Activated CD4-positive, alpha-beta T cell treated with anti-CD3 and anti-CD28 coated beads for 36 hours (primary cell): ENCODE measurements at regions of chr6 and their contacts with region 1.

Region 1: DNA sequence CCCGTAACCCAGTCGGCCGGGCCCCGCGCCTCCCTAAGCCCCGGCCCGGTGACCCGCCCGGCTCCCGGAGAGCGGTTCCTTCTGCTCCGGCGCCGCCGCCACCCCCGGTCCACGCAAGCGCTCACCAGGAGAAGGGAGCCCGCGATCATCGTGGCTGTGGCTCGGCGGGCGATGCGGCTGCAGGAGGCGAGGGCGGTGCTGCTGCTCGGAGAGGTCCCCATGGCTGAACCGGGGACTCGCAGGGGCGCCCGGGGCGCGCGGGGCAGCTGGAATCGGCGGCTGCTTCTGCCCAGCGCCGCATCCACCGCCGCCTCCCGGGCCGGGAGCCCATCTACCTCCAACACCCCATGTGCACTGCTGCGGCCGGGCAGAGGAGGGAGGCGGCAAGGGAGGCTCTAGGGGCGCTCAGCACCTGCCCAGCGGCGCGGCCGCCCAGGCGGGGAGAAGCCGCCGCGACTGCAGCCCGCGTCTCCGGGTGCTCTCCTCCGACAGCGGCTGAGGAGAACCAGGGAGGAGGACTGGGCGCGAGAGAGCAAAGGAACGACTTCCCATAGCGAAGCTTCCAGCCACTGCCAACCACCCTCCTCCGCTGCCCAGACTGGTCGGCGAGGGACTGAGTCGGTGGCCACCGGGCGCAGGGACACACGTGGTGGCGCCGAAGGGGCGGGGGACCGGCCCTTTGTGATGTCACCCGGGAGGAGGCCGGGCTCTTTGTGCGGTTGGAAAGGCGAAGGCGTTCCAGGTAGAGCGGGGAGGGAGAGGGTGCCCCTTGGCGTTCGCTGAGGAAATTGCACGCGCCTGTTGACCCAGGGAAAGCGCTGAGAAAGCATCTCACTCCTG is at the start of gene TNFRSF21:
- DNase-seq: peak; percentile 93
- ATAC-seq: peak; percentile 97
- H3K4me3 Mint-ChIP-seq: peak within 1 kb of the TSS; percentile 66
- H3K27ac Mint-ChIP-seq: peak within 1 kb of the TSS; percentile 42
- H3K4me1 Mint-ChIP-seq: peaks cover 9% of the 10 kb centered on the region
- H3K27me3 Mint-ChIP-seq: peaks cover 33% of the 10 kb centered on the region
- total RNA-seq, gene TNFRSF21: 2.6 to 2.8 TPM

Region 2: GRCh38 chr6:47097092-47097945 is 212.2 kb before region 1 on chr6:
- CTCF ChIA-PET with region 1: interaction called, 16 read pairs
- POLR2A ChIA-PET with region 1: interaction called, 3 read pairs
- intact Hi-C with region 1: loop called (anchors 1 kb)
- DNase-seq: peak; percentile 69
- ATAC-seq: peak; percentile 82
- H3K4me3 Mint-ChIP-seq: no peak overlapping the region
- H3K27ac Mint-ChIP-seq: no peak overlapping the region
- H3K4me1 Mint-ChIP-seq: no peaks in the 10 kb centered on the region
- H3K27me3 Mint-ChIP-seq: no peaks in the 10 kb centered on the region

Region 3: GRCh38 chr6:47203266-47203937 is 106.1 kb before region 1 on chr6:
- CTCF ChIA-PET with region 1: no interaction called
- POLR2A ChIA-PET with region 1: no interaction called
- intact Hi-C with region 1: loop called in 1 of 2 experiments (anchors 5 kb)
- DNase-seq: peak; percentile 21
- ATAC-seq: peak; percentile 81
- H3K4me3 Mint-ChIP-seq: no peak overlapping the region
- H3K27ac Mint-ChIP-seq: peak overlapping the region; percentile 1
- H3K4me1 Mint-ChIP-seq: peaks cover 19% of the 10 kb centered on the region
- H3K27me3 Mint-ChIP-seq: no peaks in the 10 kb centered on the region

Region 4: GRCh38 chr6:47242483-47243386 is 66.8 kb before region 1 on chr6:
- CTCF ChIA-PET with region 1: no interaction called
- POLR2A ChIA-PET with region 1: no interaction called
- intact Hi-C with region 1: loop called in 1 of 2 experiments (anchors 2 kb)
- DNase-seq: peak; percentile 77
- ATAC-seq: peak; percentile 93
- H3K4me3 Mint-ChIP-seq: no peak overlapping the region
- H3K27ac Mint-ChIP-seq: no peak overlapping the region
- H3K4me1 Mint-ChIP-seq: peaks cover 38% of the 10 kb centered on the region
- H3K27me3 Mint-ChIP-seq: no peaks in the 10 kb centered on the region